ENCODE measurements at regions of chr11 and their contacts with region 1.

Region 1: GRCh38 chr11:45332276-45332934 is 46.3 kb upstream of the SYT13 start:
- DNase-seq: peak in 2 of 10 donors; percentile 33 to 37
- H3K4me3 ChIP-seq: peak overlapping the region in 13 of 59 donors; percentile 8 to 37 (median 15)
- H3K27ac ChIP-seq: peak overlapping the region in 6 of 59 donors; percentile 1 to 68 (median 14)
- H3K27me3 ChIP-seq: no peaks in the 10 kb centered on the region
- CTCF ChIP-seq: peak; percentile 77 to 95 (median 88)

Region 2: GRCh38 chr11:44927174-44927661 is 405.2 kb before region 1 on chr11:
- intact Hi-C with region 1: loop called (anchors 5 kb)
- DNase-seq: peak; percentile 79 to 90 (median 88)
- H3K4me3 ChIP-seq: peak overlapping the region in 54 of 59 donors; percentile 13 to 64 (median 42)
- H3K27ac ChIP-seq: peak overlapping the region in 57 of 59 donors; percentile 3 to 92 (median 76)
- H3K27me3 ChIP-seq: no peaks in the 10 kb centered on the region
- CTCF ChIP-seq: peak; percentile 76 to 99 (median 94)

Region 3: DNA sequence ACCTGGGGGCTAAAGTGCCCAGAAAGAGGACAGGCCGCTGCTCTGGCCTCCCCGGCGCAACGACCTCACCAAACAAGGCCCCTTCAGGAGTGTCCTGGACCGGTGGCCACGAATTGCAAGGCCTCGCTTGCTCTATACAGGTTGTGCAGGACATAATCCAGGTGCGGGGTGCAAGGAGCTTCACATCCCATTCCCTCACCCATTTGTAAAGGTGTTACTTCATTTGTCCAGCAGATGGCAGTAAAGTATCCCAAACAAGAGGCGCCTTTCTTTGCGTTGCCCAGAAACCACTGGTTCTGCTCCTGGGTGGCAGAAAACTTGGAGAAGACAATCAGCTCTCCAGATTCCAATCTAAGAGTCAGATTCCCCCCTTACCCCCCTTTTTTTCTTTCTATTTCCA is 221.8 kb before region 1 on chr11:
- intact Hi-C with region 1: loop called (anchors 1 to 2 kb)
- DNase-seq: peak in 2 of 10 donors; percentile 58 to 59
- H3K4me3 ChIP-seq: no peak overlapping the region
- H3K27ac ChIP-seq: no peak overlapping the region
- H3K27me3 ChIP-seq: peaks cover 0 to 3% (median 0%) of the 10 kb centered on the region in 45 donors
- CTCF ChIP-seq: peak; percentile 61 to 98 (median 90)

Measured in dorsolateral prefrontal cortex (tissue), 120 donors.